ENCODE measurements at regions of chr20 and their contacts with region 1.

Region 1: GRCh38 chr20:13771853-13772453 is 12.8 kb downstream of the ESF1 start:
- DNase-seq: peak; percentile 72
- ATAC-seq: no peak; the same call in 1 of the 2 replicates
- H3K4me3 ChIP-seq: no peak overlapping the region
- H3K27ac ChIP-seq: no peak overlapping the region
- H3K4me1 ChIP-seq: no peaks in the 10 kb centered on the region
- H3K27me3 ChIP-seq: no peaks in the 10 kb centered on the region
- CTCF ChIP-seq: peak; percentile 76

Region 2: GRCh38 chr20:13458860-13459451 is 313.0 kb before region 1 on chr20:
- CTCF ChIA-PET with region 1: no interaction called
- POLR2A ChIA-PET with region 1: no interaction called
- intact Hi-C with region 1: loop called (anchors 10 kb)
- DNase-seq: peak; percentile 49
- ATAC-seq: peak; percentile 55
- H3K4me3 ChIP-seq: no peak overlapping the region
- H3K27ac ChIP-seq: no peak overlapping the region
- H3K4me1 ChIP-seq: no peaks in the 10 kb centered on the region
- H3K27me3 ChIP-seq: no peaks in the 10 kb centered on the region
- CTCF ChIP-seq: peak; percentile 89

Region 3: GRCh38 chr20:13546497-13547131 is 225.3 kb before region 1 on chr20:
- CTCF ChIA-PET with region 1: no interaction called
- POLR2A ChIA-PET with region 1: no interaction called
- intact Hi-C with region 1: loop called (anchors 2 kb)
- DNase-seq: peak; percentile 93
- ATAC-seq: peak; percentile 88
- H3K4me3 ChIP-seq: no peak overlapping the region
- H3K27ac ChIP-seq: no peak overlapping the region
- H3K4me1 ChIP-seq: peaks cover 7% of the 10 kb centered on the region
- H3K27me3 ChIP-seq: no peaks in the 10 kb centered on the region
- CTCF ChIP-seq: peak; percentile 92

Region 4: GRCh38 chr20:13581452-13581851 is 190.5 kb before region 1 on chr20:
- CTCF ChIA-PET with region 1: interaction called, 11 read pairs
- POLR2A ChIA-PET with region 1: no interaction called
- intact Hi-C with region 1: no loop called
- DNase-seq: no peak
- ATAC-seq: no peak
- H3K4me3 ChIP-seq: no peak overlapping the region
- H3K27ac ChIP-seq: no peak overlapping the region
- H3K4me1 ChIP-seq: no peaks in the 10 kb centered on the region
- H3K27me3 ChIP-seq: no peaks in the 10 kb centered on the region
- CTCF ChIP-seq: no peak

Region 5: DNA sequence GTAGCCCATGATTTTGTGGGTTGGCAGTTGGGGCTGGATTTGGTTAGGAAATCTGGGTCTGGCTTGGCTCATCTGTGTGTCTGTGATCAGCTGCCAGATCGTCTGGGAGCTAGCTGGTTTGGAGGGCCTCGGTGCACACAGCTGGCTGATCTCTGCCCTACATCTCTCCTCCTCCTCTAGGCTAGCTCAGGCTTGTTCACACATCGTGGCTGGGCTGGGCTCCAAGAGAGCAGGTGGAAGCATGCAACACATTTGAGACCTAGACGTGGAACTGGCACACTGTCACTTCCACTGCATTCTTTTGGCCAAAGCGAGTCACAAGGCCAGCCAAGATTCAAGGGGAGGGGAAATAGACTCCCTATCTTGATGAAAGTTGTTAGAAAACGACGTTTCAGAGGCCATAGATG is 28.8 kb after region 1 on chr20:
- CTCF ChIA-PET with region 1: no interaction called
- POLR2A ChIA-PET with region 1: no interaction called
- intact Hi-C with region 1: no loop called
- DNase-seq: peak; percentile 86
- ATAC-seq: peak; percentile 98
- H3K4me3 ChIP-seq: no peak overlapping the region
- H3K27ac ChIP-seq: no peak overlapping the region
- H3K4me1 ChIP-seq: peaks cover 14% of the 10 kb centered on the region
- H3K27me3 ChIP-seq: no peaks in the 10 kb centered on the region
- CTCF ChIP-seq: no peak

Measured in PC-3 (cell line).